K562 (cell line): ENCODE measurements at regions of chr20 and their contacts with region 1.

Region 1: DNA sequence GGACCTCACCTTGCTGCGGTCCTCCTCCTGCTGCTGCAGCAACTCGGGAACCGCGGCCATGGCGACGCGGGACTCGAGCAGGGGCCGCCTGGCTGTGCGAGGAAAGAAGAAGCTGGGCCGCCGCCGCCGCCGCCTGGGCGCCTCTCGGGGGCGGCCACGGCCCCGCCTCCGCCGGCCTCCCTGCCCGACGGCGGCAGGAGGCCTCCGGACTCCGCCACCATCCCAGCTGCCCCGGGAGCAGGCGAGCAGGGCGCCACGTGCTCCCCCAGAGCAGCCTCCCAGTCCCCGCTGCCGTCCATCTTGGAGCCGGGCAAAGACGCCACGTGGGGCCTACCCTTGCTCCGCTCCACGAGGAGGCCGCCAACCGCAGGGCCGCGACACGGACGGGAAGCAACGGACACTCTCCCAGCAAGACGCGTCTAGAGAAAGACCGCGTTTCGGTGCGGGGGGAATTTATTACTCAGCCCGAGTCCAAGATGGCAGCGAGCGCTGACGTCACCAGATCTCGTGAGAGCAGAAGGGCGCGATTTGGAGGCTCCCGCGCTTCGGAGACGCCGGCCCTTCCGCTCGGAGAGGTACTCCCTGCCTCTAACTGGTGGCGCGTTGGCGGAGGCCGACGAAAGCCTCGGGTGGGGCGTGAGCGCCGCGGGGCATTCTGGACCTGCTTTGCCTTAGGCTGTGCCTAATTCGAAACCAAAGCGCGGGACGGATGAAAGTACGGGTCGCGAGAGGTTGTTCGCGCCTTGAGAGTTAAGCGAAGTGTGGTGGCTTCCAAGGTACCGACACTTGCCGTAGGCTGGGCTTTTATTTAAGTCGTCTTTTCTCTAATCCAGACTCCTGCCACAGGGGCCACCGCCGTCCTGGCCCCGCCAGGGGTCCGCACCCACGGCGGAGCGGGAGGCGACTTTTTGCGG is at the starts of genes MGME1 and SNX5:
- DNase-seq: peak; percentile 76 to 96 (median 86)
- ATAC-seq: peak; percentile 80
- H3K4me3 ChIP-seq: peak within 1 kb of the TSS; percentile 90
- H3K27ac ChIP-seq: peak within 1 kb of the TSS; percentile 100
- H3K4me1 ChIP-seq: peaks cover 0 to 18% of the 10 kb centered on the region in 2 experiments; a peak in 3 of 5 replicates
- H3K27me3 ChIP-seq: no peaks in the 10 kb centered on the region
- CTCF ChIP-seq: no peak
- EP300 ChIP-seq: peak; percentile 23; the same call in 1 of the 2 replicates
- POLR2A ChIP-seq: peak; percentile 90
- RAD21 ChIP-seq: no peak
- polyA plus RNA-seq, gene MGME1: 13.4 to 20.7 TPM
- polyA plus RNA-seq, gene SNX5: 53.5 to 69.8 TPM

Region 2: GRCh38 chr20:17916433-17916891 is 52.2 kb before region 1 on chr20:
- CTCF ChIA-PET with region 1: no interaction called
- POLR2A ChIA-PET with region 1: no interaction called
- in situ Hi-C with region 1: no loop called
- intact Hi-C with region 1: no loop called
- DNase-seq: no peak
- ATAC-seq: peak; percentile 61
- H3K4me3 ChIP-seq: no peak overlapping the region
- H3K27ac ChIP-seq: no peak overlapping the region
- H3K4me1 ChIP-seq: peaks cover 0 to 2% of the 10 kb centered on the region in 2 experiments; a peak in 4 of 5 replicates
- H3K27me3 ChIP-seq: no peaks in the 10 kb centered on the region
- CTCF ChIP-seq: no peak
- EP300 ChIP-seq: no peak
- POLR2A ChIP-seq: no peak
- RAD21 ChIP-seq: no peak

Region 3: DNA sequence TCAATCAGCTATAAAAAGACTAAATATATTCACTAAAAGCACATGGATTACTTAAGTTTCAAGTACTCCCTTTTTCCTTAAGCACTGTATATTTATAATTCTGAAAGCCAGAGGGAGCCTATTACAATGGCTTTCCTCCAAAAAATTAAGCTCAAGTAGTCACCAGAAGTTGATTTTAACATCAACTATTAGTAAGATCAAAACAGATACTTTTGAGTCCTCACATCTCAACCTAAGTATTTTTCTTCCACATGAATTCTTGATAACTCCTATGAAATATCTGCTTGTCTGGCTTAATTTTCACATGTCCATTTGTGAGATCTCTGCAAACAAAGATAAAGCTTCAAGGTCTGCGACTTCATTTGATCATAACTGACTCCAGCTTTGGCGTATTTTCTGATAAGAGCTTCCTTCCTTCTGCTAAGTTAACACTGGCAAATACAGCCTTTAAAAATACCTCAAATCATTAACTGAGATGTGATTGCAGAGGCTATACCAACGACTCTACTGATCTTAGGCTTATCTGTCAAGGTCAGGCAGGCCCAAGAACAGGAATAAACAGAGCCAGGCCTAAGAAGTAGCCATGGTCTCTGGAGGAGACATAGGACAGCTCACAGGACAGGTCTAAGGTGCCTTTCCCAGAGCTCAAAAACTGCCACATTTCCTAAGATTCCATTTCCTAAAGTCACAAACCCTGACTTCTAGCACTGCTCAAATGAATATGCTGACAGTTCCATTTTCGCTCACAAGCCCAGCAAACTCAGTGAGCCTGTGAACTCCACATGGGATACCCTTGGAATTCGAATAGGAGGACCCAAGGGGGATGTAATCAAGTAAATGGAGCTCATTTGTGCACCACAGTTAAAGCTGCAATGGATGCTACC is 10.0 kb before region 1 on chr20:
- CTCF ChIA-PET with region 1: no interaction called
- POLR2A ChIA-PET with region 1: interaction called, 42 read pairs
- in situ Hi-C with region 1: no loop called
- intact Hi-C with region 1: no loop called
- DNase-seq: peak in 2 of 4 experiments; percentile 51 to 79
- ATAC-seq: peak; percentile 85
- H3K4me3 ChIP-seq: no peak overlapping the region
- H3K27ac ChIP-seq: peak overlapping the region; percentile 64
- H3K4me1 ChIP-seq: peaks cover 21 to 49% of the 10 kb centered on the region in 2 experiments
- H3K27me3 ChIP-seq: no peaks in the 10 kb centered on the region
- CTCF ChIP-seq: no peak
- EP300 ChIP-seq: peak; percentile 94
- POLR2A ChIP-seq: no peak
- RAD21 ChIP-seq: no peak